BJ (cell line): ENCODE measurements at regions of chr17 and their contacts with region 1.

Region 1: GRCh38 chr17:7650509-7651096 is at the start of gene ATP1B2:
- DNase-seq: no peak
- H3K4me3 ChIP-seq: peak within 1 kb of the TSS; percentile 31
- H3K27me3 ChIP-seq: peaks cover 45% of the 10 kb centered on the region
- CTCF ChIP-seq: no peak
- polyA plus RNA-seq, gene ATP1B2: not detected in 2 replicates

Region 2: GRCh38 chr17:7632492-7632894 is 18.1 kb before region 1 on chr17:
- CTCF ChIA-PET with region 1: interaction called, 26 read pairs
- POLR2A ChIA-PET with region 1: no interaction called
- DNase-seq: no peak
- H3K4me3 ChIP-seq: no peak overlapping the region
- H3K27me3 ChIP-seq: no peaks in the 10 kb centered on the region
- CTCF ChIP-seq: peak; percentile 67

Region 3: GRCh38 chr17:7700510-7700909 is 49.9 kb after region 1 on chr17:
- CTCF ChIA-PET with region 1: no interaction called
- POLR2A ChIA-PET with region 1: no interaction called
- DNase-seq: no peak
- H3K4me3 ChIP-seq: no peak overlapping the region
- H3K27me3 ChIP-seq: peaks cover 5% of the 10 kb centered on the region
- CTCF ChIP-seq: no peak